ENCODE measurements at regions of chr17 and their contacts with region 1.

Region 1: DNA sequence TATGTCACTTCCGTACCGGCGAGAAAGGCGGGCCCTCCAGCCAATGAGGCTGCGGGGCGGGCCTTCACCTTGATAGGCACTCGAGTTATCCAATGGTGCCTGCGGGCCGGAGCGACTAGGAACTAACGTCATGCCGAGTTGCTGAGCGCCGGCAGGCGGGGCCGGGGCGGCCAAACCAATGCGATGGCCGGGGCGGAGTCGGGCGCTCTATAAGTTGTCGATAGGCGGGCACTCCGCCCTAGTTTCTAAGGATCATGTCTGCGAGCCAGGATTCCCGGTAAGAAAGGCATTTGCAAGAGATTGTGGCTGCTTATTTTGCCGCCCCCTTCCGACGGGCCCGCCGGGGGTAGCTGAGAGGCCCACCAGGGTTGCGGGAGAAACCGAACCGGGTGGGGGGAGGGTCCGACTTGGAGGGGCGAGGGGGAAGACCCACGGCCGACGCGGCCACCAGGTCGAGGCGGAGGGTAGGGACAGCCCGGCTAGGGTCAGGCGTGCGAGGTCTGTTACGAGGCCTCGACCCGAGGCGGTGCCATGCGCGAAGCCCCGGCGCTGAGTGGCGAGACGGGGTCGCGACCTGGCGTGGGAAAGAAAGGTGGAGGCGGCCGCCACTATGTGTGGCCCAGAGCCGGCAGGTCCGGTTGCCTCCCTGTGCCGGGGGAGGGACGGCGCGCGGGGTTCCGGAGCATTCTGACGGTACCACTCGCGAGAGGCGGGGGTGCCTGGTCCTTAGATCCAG is 6.7 kb upstream of the CD68 start:
- DNase-seq: peak; percentile 100
- H3K4me3 Mint-ChIP-seq: peak overlapping the region; percentile 93
- H3K27ac Mint-ChIP-seq: peak overlapping the region; percentile 97
- H3K4me1 Mint-ChIP-seq: peaks cover 48% of the 10 kb centered on the region
- H3K27me3 Mint-ChIP-seq: no peaks in the 10 kb centered on the region

Region 2: DNA sequence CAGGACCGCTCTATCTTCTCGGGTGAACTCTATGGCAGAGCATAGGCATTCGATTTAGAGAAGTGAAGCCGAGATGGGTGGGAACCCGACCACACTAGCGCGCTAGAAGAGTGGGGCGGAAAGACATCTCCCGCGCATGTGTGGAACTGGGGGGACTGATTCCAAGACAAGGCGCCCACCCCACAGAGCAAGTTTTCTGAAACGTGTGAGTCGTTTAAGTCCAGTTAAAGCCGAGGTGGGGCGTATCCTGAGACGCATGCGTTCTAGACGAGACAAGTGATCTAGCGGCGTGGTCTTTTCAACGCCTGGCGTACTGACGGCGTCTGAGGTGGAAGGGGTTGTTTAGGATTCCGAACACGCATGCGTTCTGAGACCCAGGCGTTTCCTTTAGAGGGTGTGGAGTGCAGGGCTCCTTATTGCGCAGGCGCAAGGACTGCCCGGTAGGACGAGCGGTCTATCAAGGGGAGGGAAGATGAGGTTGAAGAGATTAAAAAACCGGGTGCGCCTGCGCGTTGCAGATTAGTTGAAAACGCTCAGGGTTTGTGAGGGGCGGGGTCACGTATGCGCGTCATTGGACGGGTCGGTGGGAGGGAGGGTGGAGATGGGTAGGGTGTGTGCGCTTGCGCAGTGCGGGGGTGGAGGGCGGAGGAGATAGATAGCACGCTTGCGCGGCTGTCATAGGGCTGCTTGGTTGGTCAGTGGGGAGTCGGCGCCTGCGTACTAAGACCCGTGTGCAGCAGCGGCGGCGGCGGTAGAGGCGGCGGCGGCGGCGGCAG is 265.7 kb before region 1 on chr17 and contains the start of gene EIF5A:
- intact Hi-C with region 1: loop called (anchors 5 kb)
- DNase-seq: peak; percentile 99
- H3K4me3 Mint-ChIP-seq: peak within 1 kb of the TSS; percentile 94
- H3K27ac Mint-ChIP-seq: peak within 1 kb of the TSS; percentile 97
- H3K4me1 Mint-ChIP-seq: peaks cover 32% of the 10 kb centered on the region
- H3K27me3 Mint-ChIP-seq: peaks cover under 1% of the 10 kb centered on the region
- total RNA-seq, gene EIF5A: 1,189 and 1,199 TPM in 2 replicates

Region 3: DNA sequence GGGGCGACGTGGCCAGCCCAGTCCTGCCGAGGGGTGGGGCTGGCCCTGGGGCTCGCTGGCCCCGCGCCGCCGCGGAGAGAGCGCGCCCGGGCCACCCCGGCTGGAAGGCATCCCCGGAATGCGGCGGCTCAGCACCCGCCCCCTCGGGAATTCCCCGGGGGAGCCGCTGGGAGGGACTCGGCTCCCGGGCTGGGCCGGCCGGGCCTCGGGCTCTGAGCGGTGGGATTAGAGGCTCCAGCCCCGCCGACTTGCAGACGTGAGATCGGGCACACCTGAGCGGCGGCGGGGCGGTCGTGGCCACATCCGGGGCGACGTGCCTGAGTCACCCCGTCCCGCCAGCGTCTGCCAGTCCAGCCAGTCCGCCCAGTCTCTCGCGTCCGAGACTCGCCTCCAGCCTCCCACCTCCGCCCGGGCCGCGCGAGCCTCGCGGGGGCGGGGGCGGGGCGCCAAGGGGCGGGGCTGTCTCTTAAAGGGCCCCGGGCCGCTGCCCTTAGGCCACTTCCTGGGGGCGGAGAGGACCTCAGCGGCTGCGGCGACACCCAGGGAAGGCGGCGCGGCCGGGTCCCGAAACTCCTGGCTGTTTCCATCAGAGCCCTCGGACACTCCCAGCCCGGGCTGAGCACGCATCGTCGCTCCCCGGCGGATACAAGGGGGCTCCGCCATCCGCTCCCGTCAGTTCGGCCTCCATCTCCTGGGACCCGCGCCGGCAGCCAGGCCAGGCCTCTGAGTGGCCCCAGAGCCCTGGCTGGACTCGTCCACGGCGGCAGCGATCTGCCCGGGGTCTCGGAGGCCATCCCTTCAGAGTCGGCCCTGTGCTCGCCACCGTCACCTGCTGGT is 220.9 kb before region 1 on chr17 and contains the start of gene KCTD11:
- intact Hi-C with region 1: loop called (anchors 5 kb)
- DNase-seq: peak; percentile 74
- H3K4me3 Mint-ChIP-seq: peak within 1 kb of the TSS; percentile 90
- H3K27ac Mint-ChIP-seq: peak within 1 kb of the TSS; percentile 87
- H3K4me1 Mint-ChIP-seq: peaks cover 32% of the 10 kb centered on the region
- H3K27me3 Mint-ChIP-seq: no peaks in the 10 kb centered on the region
- total RNA-seq, gene KCTD11: 8.0 and 8.5 TPM in 2 replicates

Region 4: DNA sequence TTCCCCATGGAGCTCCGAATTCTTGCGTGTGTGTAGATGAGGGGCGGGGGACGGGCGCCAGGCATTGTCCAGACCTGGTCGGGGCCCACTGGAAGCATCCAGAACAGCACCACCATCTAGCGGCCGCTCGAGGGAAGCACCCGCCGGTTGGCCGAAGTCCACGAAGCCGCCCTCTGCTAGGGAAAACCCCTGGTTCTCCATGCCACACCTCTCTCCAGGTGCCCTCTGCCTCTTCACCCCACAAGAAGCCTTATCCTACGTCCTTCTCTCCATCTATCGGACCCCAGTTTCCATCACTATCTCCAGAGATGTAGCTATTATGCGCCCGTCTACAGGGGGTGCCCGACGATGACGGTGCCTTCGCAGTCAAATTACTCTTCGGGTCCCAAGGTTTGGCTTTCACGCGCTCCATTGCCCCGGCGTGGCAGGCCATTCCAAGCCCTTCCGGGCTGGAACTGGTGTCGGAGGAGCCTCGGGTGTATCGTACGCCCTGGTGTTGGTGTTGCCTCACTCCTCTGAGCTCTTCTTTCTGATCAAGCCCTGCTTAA is 11.7 kb before region 1 on chr17:
- intact Hi-C with region 1: loop called (anchors 1 kb)
- DNase-seq: peak; percentile 82
- H3K4me3 Mint-ChIP-seq: peak overlapping the region; percentile 92
- H3K27ac Mint-ChIP-seq: peak overlapping the region; percentile 90
- H3K4me1 Mint-ChIP-seq: peaks cover 34% of the 10 kb centered on the region
- H3K27me3 Mint-ChIP-seq: no peaks in the 10 kb centered on the region

Region 5: DNA sequence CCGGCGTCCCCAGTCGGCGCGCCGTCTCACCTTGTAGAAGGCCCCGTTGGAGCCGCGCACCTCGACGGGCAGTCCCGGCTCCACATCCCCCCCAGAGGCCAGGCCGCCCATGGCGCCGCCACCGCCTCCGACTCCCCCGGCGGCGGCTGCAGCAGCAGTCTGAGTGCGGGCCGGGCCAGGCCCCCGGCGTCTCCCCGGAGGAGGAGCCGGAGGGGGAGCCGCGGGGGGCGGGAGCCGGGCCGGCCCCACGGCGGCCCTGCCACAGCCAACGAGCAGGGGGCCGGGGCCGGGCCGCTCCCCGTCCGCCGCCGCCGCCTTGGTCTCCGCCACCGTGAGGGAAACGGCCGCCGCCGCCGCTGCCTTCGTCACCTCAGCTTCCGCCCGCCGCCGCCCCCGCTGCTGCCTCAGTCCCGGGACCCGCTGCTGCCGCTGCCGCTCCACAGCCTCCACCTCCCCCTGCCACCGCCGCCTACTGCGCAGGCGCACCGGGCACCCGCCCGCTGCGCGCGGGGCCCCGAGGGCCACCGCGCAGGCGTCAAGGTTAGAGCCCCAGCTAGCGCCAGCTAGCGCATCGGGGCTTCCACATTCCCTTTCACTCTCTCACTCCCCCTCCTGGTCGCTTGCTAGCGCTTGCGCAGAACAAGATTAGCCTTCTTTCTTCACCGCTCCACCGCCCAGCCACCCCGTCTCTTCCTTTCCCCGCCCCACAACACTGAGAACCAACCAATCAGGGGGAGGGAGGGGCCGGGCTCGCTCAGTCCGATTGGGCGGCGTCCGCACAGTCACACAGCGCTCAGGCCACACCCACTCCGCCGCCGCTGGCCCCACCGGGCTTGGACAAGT is 41.9 kb after region 1 on chr17 and contains the start of gene FXR2:
- intact Hi-C with region 1: loop called (anchors 2 kb)
- DNase-seq: peak; percentile 99
- H3K4me3 Mint-ChIP-seq: peak within 1 kb of the TSS; percentile 89
- H3K27ac Mint-ChIP-seq: peak within 1 kb of the TSS; percentile 84
- H3K4me1 Mint-ChIP-seq: peaks cover 22% of the 10 kb centered on the region
- H3K27me3 Mint-ChIP-seq: no peaks in the 10 kb centered on the region
- total RNA-seq, gene FXR2: 59.0 and 63.1 TPM in 2 replicates

Region 6: DNA sequence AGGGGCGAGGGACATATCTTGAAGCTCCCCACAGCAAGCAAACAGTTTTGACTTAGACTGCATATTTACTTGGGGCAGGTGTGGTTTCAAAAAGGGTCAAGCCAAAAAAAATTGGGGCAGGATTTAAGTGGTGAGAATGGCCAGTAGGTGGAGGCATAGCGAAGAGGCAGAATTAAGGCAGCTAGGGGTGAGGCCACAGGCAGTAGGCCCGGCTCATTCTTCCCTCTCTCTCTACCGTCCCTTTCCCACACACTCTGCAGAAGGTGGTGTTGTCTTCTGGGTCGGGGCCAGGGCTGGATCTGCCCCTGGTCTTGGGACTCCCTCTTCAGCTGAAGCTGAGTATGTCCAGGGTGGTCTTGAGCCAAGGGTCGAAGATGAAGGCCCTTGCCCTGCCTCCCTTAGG is 59.7 kb after region 1 on chr17:
- intact Hi-C with region 1: no loop called
- DNase-seq: peak; percentile 25
- H3K4me3 Mint-ChIP-seq: no peak overlapping the region
- H3K27ac Mint-ChIP-seq: no peak overlapping the region
- H3K4me1 Mint-ChIP-seq: peaks cover 7% of the 10 kb centered on the region
- H3K27me3 Mint-ChIP-seq: no peaks in the 10 kb centered on the region

Region 7: GRCh38 chr17:7834962-7835813 is 262.4 kb after region 1 on chr17:
- intact Hi-C with region 1: loop called (anchors 2 kb)
- DNase-seq: peak; percentile 80
- H3K4me3 Mint-ChIP-seq: peak overlapping the region; percentile 91
- H3K27ac Mint-ChIP-seq: peak overlapping the region; percentile 89
- H3K4me1 Mint-ChIP-seq: peaks cover 42% of the 10 kb centered on the region
- H3K27me3 Mint-ChIP-seq: peaks cover 11% of the 10 kb centered on the region